Activated T-helper 1 cell treated with anti-CD3 and anti-CD28 coated beads, Interleukin-12 subunit alpha, Interleukin-12 subunit beta, Interleukin-2, Interleukin-4 antibody, amounts not matched to agents 30 ng/mL and 10 ng/mL and 1 ng/mL, durations not matched to agents 14 hours and 24 hours and 36 hours (primary cell): ENCODE measurements at regions of chr10 and their contacts with region 1.

Region 1: DNA sequence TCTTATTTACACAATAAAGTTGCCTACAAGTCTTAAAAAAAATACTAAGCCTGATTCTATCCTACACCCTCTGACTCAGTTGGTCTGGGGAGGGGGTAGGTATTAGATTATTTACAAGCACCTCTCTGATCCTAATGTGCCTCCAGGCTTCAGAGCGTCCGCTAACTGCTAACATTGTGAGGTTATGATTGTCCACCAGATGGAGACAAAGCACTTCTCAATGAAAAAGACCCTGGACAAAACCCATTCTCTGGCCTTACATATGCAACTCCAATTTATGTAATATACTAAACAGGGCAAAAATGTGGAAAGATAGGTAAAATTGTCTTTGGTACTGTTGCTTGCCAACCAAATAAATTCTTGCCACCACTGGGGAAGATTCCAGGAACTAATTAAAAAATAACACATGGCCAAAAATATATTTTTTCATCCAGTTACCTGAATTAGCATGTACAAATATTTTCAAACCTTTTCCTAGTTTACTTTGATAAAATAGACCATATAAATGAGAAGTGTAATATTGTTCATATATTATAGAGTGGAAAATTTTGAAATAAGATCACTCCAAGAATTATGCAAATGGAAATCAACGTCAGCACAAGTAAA is 92.4 kb downstream of the KIF20B start:
- DNase-seq: no peak
- H3K4me3 Mint-ChIP-seq: no peak overlapping the region
- H3K27ac Mint-ChIP-seq: no peak overlapping the region
- H3K4me1 Mint-ChIP-seq: peaks cover 7% of the 10 kb centered on the region
- H3K27me3 Mint-ChIP-seq: peaks cover 4% of the 10 kb centered on the region

Region 2: GRCh38 chr10:89384474-89385340 is 409.0 kb before region 1 on chr10:
- intact Hi-C with region 1: no loop called
- DNase-seq: no peak
- H3K4me3 Mint-ChIP-seq: no peak overlapping the region
- H3K27ac Mint-ChIP-seq: no peak overlapping the region
- H3K4me1 Mint-ChIP-seq: no peaks in the 10 kb centered on the region
- H3K27me3 Mint-ChIP-seq: peaks cover 22% of the 10 kb centered on the region

Region 3: DNA sequence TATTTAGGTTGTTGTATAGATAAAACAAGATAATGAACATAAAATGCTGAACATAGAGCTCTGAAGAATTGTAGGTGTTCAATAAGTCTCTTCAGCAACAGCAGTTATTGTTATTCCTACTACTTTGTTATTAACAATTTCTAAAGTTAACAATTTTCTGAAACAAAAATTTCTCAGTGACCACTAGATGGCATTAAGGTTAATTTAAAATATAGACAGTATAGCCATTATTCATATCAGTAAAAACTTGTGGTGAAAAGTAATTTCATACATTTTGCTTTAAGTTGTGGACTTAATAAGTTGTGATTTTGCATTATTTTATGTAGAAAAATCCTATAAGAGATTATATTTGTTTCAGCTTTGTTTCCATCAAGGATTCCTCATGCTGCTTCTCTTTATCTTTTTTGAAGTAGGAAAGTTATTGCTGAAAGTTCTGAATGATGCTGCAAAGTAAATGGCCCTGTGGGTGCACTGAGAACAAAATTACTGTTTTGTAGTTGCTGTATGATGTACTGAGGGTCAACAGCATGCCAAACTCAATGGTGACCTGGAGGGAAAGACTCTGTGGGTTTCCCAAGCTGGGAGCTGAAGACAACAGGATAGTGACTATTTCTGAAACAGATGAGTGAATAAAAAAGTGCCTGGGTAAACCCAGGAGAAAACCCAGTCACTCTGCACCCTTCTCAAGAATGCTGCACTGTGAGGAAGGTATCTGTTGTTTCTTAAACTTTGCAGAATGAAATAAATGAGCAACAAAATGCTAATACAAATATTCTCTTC is 161.2 kb after region 1 on chr10:
- intact Hi-C with region 1: loop called (anchors 5 kb)
- DNase-seq: no peak
- H3K4me3 Mint-ChIP-seq: no peak overlapping the region
- H3K27ac Mint-ChIP-seq: no peak overlapping the region
- H3K4me1 Mint-ChIP-seq: no peaks in the 10 kb centered on the region
- H3K27me3 Mint-ChIP-seq: no peaks in the 10 kb centered on the region

Region 4: GRCh38 chr10:90138844-90139243 is 345.1 kb after region 1 on chr10:
- intact Hi-C with region 1: loop called (anchors 1 kb)
- DNase-seq: no peak
- H3K4me3 Mint-ChIP-seq: no peak overlapping the region
- H3K27ac Mint-ChIP-seq: no peak overlapping the region
- H3K4me1 Mint-ChIP-seq: no peaks in the 10 kb centered on the region
- H3K27me3 Mint-ChIP-seq: no peaks in the 10 kb centered on the region

Region 5: GRCh38 chr10:90592638-90593302 is 799.0 kb after region 1 on chr10:
- intact Hi-C with region 1: loop called (anchors 5 kb)
- DNase-seq: no peak
- H3K4me3 Mint-ChIP-seq: no peak overlapping the region
- H3K27ac Mint-ChIP-seq: no peak overlapping the region
- H3K4me1 Mint-ChIP-seq: no peaks in the 10 kb centered on the region
- H3K27me3 Mint-ChIP-seq: peaks cover 3% of the 10 kb centered on the region

Region 6: GRCh38 chr10:90751107-90751997 is 957.6 kb after region 1 on chr10:
- intact Hi-C with region 1: loop called (anchors 1 kb)
- DNase-seq: peak; percentile 13
- H3K4me3 Mint-ChIP-seq: no peak overlapping the region
- H3K27ac Mint-ChIP-seq: no peak overlapping the region
- H3K4me1 Mint-ChIP-seq: no peaks in the 10 kb centered on the region
- H3K27me3 Mint-ChIP-seq: peaks cover 14% of the 10 kb centered on the region

Region 7: GRCh38 chr10:90787393-90788198 is 993.8 kb after region 1 on chr10:
- intact Hi-C with region 1: loop called (anchors 1 kb)
- DNase-seq: no peak
- H3K4me3 Mint-ChIP-seq: no peak overlapping the region
- H3K27ac Mint-ChIP-seq: no peak overlapping the region
- H3K4me1 Mint-ChIP-seq: peaks cover 7% of the 10 kb centered on the region
- H3K27me3 Mint-ChIP-seq: peaks cover 16% of the 10 kb centered on the region

Region 8: GRCh38 chr10:90862908-90863514 is 1069.3 kb after region 1 on chr10:
- intact Hi-C with region 1: loop called (anchors 2 kb)
- DNase-seq: no peak
- H3K4me3 Mint-ChIP-seq: no peak overlapping the region
- H3K27ac Mint-ChIP-seq: no peak overlapping the region
- H3K4me1 Mint-ChIP-seq: peaks cover 11% of the 10 kb centered on the region
- H3K27me3 Mint-ChIP-seq: peaks cover 72% of the 10 kb centered on the region